ENCODE measurements at regions of chr4 and their contacts with region 1.

Region 1: DNA sequence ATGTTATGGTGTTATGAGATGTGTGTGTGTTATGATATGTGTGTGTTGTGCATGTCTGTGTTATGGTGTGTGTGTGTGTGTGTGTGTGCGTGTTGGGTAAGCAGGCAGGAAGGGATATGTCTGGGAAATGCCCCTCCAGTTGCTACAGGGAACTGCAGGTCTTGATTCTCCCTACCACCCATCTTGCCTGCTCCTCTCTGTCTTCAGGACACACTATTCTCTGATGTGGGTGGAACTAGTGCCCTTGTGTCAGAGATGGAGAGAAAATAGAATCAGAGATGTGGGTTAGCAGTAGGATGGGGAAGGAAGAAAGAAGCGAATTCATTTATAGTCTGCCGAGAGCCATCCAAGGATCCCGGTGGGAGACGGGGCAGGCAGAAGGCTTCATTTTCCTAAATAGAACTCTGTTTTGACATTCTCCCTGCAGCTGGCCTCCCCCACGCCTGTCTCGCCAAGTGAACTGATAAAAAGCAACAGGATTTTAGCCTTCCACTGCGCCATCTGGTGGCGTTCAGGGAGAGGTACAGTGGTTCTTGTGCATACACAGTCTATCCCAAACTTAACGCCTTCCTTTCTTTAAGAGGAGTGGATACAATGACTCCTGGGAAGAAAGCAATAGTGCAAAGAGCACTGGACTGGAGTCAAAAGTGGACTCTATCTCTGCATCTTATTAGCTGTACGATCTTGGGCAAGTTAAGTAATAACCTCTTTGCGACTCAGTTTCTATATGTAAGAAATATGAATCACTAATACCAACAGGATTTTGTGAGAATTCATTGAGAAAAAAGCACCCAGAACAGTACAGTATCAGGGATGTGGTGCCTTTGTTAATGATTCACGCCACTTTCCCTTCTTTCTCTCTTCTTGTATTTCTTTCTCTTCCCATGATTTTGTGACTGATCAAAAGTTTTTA is 14.1 kb upstream of the MGST2 start:
- DNase-seq: peak; percentile 55 to 88
- ATAC-seq: peak; percentile 83 to 95 (median 94)
- H3K4me3 ChIP-seq: no peak overlapping the region
- H3K4me3 Mint-ChIP-seq: no peak overlapping the region
- H3K27ac ChIP-seq: no peak overlapping the region
- H3K27ac Mint-ChIP-seq: peak overlapping the region in 1 of 2 donors; percentile 1
- H3K4me1 ChIP-seq: peaks cover 3% of the 10 kb centered on the region
- H3K4me1 Mint-ChIP-seq: peaks cover 5 to 10% of the 10 kb centered on the region in 2 donors
- H3K27me3 ChIP-seq: no peaks in the 10 kb centered on the region
- H3K27me3 Mint-ChIP-seq: peaks cover 4 to 8% of the 10 kb centered on the region in 2 donors
- CTCF ChIP-seq: peak; percentile 96

Region 2: GRCh38 chr4:139030614-139031235 is 620.8 kb before region 1 on chr4:
- intact Hi-C with region 1: loop called (anchors 5 kb)
- DNase-seq: peak; percentile 60 to 92
- ATAC-seq: peak; percentile 70 to 94 (median 82)
- H3K4me3 ChIP-seq: no peak overlapping the region
- H3K4me3 Mint-ChIP-seq: no peak overlapping the region
- H3K27ac ChIP-seq: no peak overlapping the region
- H3K27ac Mint-ChIP-seq: peak overlapping the region; percentile 39 to 73
- H3K4me1 ChIP-seq: peaks cover 5% of the 10 kb centered on the region
- H3K4me1 Mint-ChIP-seq: peaks cover 17 to 25% of the 10 kb centered on the region in 2 donors
- H3K27me3 ChIP-seq: no peaks in the 10 kb centered on the region
- H3K27me3 Mint-ChIP-seq: no peaks in the 10 kb centered on the region
- CTCF ChIP-seq: peak; percentile 84

Region 3: DNA sequence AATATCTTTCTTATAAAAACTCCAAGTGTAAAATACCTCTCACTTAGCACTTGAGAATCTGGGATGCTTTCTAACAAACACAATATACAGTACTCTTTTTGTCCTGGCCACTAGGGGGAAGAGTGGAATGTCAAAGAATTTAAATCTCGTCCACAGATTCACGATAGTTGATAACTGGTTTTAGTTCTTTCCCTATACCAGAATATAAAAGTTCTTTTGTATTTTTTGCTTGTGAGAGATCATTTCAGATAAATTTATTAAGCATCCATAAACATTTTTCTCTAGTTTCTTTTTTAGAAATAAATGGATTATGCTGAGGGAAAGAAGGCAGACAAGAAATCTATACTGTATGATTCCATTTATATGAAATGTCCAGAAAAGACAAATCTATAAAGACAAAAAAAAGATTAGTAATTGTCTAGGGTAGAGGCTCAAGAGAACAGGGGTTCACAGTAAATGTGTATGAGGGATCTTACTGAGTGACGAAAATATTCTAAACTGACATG is 422.0 kb before region 1 on chr4:
- intact Hi-C with region 1: loop called (anchors 10 kb)
- DNase-seq: peak in 1 of 2 donors; percentile 75
- ATAC-seq: peak; percentile 62 to 83 (median 82)
- H3K4me3 ChIP-seq: no peak overlapping the region
- H3K4me3 Mint-ChIP-seq: no peak overlapping the region
- H3K27ac ChIP-seq: no peak overlapping the region
- H3K27ac Mint-ChIP-seq: no peak overlapping the region
- H3K4me1 ChIP-seq: no peaks in the 10 kb centered on the region
- H3K4me1 Mint-ChIP-seq: peaks cover 0 to 5% of the 10 kb centered on the region in 2 donors
- H3K27me3 ChIP-seq: no peaks in the 10 kb centered on the region
- H3K27me3 Mint-ChIP-seq: no peaks in the 10 kb centered on the region
- CTCF ChIP-seq: peak; percentile 69

Region 4: GRCh38 chr4:139279760-139280620 is 371.5 kb before region 1 on chr4 and contains the start of gene MGARP:
- intact Hi-C with region 1: no loop called
- DNase-seq: peak in 1 of 2 donors; percentile 41
- ATAC-seq: peak; percentile 58 to 80 (median 59)
- H3K4me3 ChIP-seq: peak within 1 kb of the TSS; percentile 26
- H3K4me3 Mint-ChIP-seq: peak within 1 kb of the TSS; percentile 86
- H3K27ac ChIP-seq: no peak within 1 kb of the TSS
- H3K27ac Mint-ChIP-seq: no peak within 1 kb of the TSS
- H3K4me1 ChIP-seq: peaks cover 17% of the 10 kb centered on the region
- H3K4me1 Mint-ChIP-seq: peaks cover 19% of the 10 kb centered on the region in 2 donors
- H3K27me3 ChIP-seq: peaks cover 41% of the 10 kb centered on the region
- H3K27me3 Mint-ChIP-seq: peaks cover 32 to 41% of the 10 kb centered on the region in 2 donors
- CTCF ChIP-seq: no peak
- total RNA-seq, gene MGARP: 0.35 to 0.78 (median 0.63) TPM

Region 5: DNA sequence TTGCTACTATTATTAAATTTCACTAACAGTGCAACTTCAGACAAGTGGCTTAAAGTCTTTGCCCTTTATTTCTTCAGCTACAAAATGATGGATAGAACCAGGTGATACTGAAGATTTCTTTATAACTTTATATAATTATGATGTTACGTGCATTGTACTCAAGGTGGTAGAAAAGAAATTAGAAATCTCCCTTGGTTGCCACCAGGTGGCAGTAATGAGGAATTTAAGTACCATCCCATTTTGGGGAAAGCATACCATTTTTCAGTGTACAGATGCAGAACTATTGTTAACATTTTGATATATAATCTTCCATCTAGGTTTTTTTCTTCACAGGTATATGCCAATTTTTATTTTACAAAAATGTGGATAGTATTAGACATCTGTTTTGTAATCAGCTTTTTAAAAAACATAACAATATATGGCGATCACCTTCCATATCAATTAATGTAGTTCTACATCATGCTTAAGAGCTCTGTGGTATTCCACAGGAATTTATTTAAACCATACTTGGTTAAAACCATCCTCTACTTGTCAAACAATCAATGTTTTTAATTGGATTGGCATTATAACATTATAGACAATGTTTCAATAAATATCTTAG is 235.4 kb before region 1 on chr4:
- intact Hi-C with region 1: loop called (anchors 1 kb)
- DNase-seq: peak in 1 of 2 donors; percentile 80
- ATAC-seq: peak in 2 of 3 donors; percentile 49 to 57
- H3K4me3 ChIP-seq: no peak overlapping the region
- H3K4me3 Mint-ChIP-seq: no peak overlapping the region
- H3K27ac ChIP-seq: no peak overlapping the region
- H3K27ac Mint-ChIP-seq: no peak overlapping the region
- H3K4me1 ChIP-seq: peaks cover 8% of the 10 kb centered on the region
- H3K4me1 Mint-ChIP-seq: peaks cover 6 to 13% of the 10 kb centered on the region in 2 donors
- H3K27me3 ChIP-seq: no peaks in the 10 kb centered on the region
- H3K27me3 Mint-ChIP-seq: no peaks in the 10 kb centered on the region
- CTCF ChIP-seq: peak; percentile 90

Region 6: DNA sequence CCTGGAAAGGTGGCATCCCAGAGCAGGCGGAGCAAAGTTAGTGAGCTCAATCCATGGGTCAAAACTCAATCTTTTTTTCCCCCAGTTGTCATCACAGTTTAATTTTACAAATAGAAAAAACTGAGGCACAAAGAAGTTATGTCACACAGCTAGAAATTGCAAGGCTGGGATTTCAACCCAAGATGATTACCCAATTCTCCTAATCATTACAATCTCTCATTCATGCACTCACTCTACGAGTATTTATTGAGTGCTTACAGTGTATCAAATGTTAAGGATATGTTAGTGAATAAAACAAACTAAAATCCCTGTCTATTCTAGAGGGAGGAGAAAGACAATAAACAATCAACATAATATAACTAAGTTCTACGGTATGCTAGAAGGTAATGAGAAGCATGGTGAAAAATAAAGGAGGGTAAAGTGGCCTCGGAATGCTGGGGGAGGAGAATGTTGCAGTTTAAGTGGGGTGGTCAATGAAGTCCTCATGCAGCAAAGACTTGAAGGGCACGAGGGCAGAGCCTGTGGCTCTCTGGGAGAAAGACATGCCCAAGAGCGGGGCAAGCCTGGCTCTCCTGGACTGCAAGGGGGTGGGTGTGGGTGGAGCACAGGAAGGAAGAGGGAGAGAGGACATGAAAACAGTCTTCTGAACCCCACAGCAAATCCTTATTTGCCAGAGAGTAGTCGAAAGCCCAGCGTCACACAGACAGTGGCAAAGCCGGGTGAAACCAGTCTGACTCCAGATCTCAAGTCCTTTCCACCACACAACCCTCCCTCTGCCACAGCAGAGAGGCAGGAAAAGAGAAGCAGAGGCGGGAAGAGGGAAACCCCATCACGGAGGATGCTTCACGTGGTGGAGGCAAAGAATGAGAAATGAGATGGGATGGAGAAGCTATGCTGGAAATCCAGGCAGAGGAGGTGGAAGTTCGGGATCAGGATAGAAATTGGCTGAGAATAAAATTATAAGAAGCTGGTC is 149.3 kb before region 1 on chr4:
- intact Hi-C with region 1: loop called (anchors 1 kb)
- DNase-seq: no peak
- ATAC-seq: no peak
- H3K4me3 ChIP-seq: no peak overlapping the region
- H3K4me3 Mint-ChIP-seq: no peak overlapping the region
- H3K27ac ChIP-seq: no peak overlapping the region
- H3K27ac Mint-ChIP-seq: no peak overlapping the region
- H3K4me1 ChIP-seq: peaks cover 5% of the 10 kb centered on the region
- H3K4me1 Mint-ChIP-seq: peaks cover 9 to 10% of the 10 kb centered on the region in 2 donors
- H3K27me3 ChIP-seq: no peaks in the 10 kb centered on the region
- H3K27me3 Mint-ChIP-seq: peaks cover 13 to 14% of the 10 kb centered on the region in 2 donors
- CTCF ChIP-seq: no peak

Region 7: DNA sequence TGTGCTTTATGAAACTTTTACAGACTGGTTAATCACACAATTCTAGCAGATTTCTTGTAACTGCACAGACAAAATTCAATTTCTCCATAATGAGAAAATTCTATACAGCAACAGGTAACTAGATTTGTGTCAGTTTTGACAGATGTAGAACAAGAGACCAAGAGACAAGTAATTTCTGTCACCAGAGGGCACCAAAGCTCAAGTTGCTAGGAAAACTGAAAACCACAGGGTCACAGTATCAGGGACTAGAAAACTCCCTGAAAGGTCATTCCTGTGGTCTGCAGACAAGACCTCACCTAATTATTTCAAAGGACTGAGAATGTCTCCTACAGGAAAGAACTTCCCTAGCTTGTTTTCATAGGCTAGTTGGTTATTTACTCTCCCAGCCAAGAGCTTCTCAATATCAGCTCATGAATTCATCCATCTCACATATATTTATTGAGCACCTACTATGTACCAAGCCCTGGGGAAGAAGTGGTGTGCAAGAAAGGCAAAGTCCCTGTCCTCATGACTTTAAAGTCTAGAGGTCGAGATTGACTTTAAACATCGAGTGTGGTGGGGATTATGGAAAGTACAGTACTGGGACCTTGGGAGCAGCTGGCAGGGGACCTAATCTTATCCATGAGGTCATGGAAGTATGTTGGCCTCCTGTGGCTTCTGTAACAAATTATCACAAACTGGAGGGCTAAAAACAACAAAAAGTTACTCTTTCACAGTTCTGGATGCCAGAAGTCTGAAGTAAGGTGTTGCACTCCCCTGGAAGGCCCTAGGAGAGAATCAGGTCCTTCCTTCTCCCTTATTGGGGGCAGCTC is 47.8 kb before region 1 on chr4:
- intact Hi-C with region 1: loop called (anchors 1 kb)
- DNase-seq: peak in 1 of 2 donors; percentile 70
- ATAC-seq: peak in 1 of 3 donors; percentile 48
- H3K4me3 ChIP-seq: no peak overlapping the region
- H3K4me3 Mint-ChIP-seq: no peak overlapping the region
- H3K27ac ChIP-seq: no peak overlapping the region
- H3K27ac Mint-ChIP-seq: no peak overlapping the region
- H3K4me1 ChIP-seq: peaks cover 9% of the 10 kb centered on the region
- H3K4me1 Mint-ChIP-seq: peaks cover 16 to 17% of the 10 kb centered on the region in 2 donors
- H3K27me3 ChIP-seq: no peaks in the 10 kb centered on the region
- H3K27me3 Mint-ChIP-seq: peaks cover 18 to 25% of the 10 kb centered on the region in 2 donors
- CTCF ChIP-seq: peak; percentile 56

Measured in natural killer cell (primary cell).